WTC11 (cell line): ENCODE measurements at regions of chr15 and their contacts with region 1.

Region 1: GRCh38 chr15:45118131-45118588 is 4.0 kb downstream of the DUOXA2 start:
- DNase-seq: peak; percentile 93
- ATAC-seq: peak; percentile 92
- H3K4me3 Mint-ChIP-seq: peak overlapping the region; percentile 64
- H3K27ac Mint-ChIP-seq: no peak overlapping the region
- H3K4me1 Mint-ChIP-seq: peaks cover 30% of the 10 kb centered on the region
- H3K27me3 Mint-ChIP-seq: peaks cover 97% of the 10 kb centered on the region
- CTCF ChIP-seq: peak; percentile 86

Region 2: GRCh38 chr15:44971036-44971435 is 147.1 kb before region 1 on chr15:
- CTCF ChIA-PET with region 1: interaction called, 21 read pairs
- POLR2A ChIA-PET with region 1: no interaction called
- DNase-seq: no peak
- ATAC-seq: no peak
- H3K4me3 Mint-ChIP-seq: no peak overlapping the region
- H3K27ac Mint-ChIP-seq: no peak overlapping the region
- H3K4me1 Mint-ChIP-seq: no peaks in the 10 kb centered on the region
- H3K27me3 Mint-ChIP-seq: no peaks in the 10 kb centered on the region; the same call in 1 of the 2 replicates
- CTCF ChIP-seq: no peak

Region 3: GRCh38 chr15:45091161-45091560 is 27.0 kb before region 1 on chr15:
- CTCF ChIA-PET with region 1: interaction called, 14 read pairs
- POLR2A ChIA-PET with region 1: no interaction called
- DNase-seq: no peak
- ATAC-seq: no peak
- H3K4me3 Mint-ChIP-seq: no peak overlapping the region
- H3K27ac Mint-ChIP-seq: no peak overlapping the region
- H3K4me1 Mint-ChIP-seq: no peaks in the 10 kb centered on the region
- H3K27me3 Mint-ChIP-seq: peaks cover 16% of the 10 kb centered on the region
- CTCF ChIP-seq: no peak

Region 4: DNA sequence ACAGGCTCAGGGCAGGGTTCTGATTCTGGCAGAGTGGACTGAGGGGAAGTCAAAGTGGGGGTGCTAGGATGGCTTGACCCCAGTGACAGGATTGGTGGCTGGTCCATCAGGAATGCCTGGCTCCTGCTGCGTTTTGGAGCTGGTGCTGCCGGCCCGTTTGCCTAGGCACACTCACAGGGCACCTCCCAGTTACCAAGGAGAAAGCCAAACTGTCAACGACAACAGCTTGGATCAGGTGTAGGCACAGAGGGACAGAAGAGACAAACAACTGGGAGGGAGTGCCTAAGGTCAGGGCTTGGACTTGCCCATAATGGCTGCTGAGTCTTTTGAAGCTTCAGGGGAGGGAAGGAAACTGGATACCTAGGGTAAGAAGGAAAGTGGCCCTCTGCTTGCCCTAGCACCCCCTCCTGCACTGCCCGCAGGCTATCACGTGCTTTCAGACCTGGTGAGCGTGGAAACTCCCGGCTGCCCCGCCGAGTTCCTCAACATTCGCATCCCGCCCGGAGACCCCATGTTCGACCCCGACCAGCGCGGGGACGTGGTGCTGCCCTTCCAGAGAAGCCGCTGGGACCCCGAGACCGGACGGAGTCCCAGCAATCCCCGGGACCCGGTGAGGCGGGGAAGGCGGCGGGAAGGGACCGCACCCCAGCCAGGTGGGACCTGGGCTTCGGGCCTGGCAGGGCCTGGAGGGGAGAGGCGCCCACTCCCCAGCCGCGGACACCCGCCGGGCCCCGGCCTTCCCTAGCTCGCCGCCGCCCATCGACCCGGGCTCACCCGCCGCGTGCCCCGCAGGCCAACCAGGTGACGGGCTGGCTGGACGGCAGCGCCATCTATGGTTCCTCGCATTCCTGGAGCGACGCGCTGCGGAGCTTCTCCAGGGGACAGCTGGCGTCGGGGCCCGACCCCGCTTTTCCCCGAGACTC is 16.8 kb after region 1 on chr15:
- CTCF ChIA-PET with region 1: interaction called, 231 read pairs
- POLR2A ChIA-PET with region 1: interaction called, 5 read pairs
- DNase-seq: peak; percentile 60
- ATAC-seq: peak; percentile 72
- H3K4me3 Mint-ChIP-seq: peak overlapping the region; percentile 66
- H3K27ac Mint-ChIP-seq: no peak overlapping the region
- H3K4me1 Mint-ChIP-seq: peaks cover 12% of the 10 kb centered on the region
- H3K27me3 Mint-ChIP-seq: peaks cover 83% of the 10 kb centered on the region
- CTCF ChIP-seq: no peak

Region 5: DNA sequence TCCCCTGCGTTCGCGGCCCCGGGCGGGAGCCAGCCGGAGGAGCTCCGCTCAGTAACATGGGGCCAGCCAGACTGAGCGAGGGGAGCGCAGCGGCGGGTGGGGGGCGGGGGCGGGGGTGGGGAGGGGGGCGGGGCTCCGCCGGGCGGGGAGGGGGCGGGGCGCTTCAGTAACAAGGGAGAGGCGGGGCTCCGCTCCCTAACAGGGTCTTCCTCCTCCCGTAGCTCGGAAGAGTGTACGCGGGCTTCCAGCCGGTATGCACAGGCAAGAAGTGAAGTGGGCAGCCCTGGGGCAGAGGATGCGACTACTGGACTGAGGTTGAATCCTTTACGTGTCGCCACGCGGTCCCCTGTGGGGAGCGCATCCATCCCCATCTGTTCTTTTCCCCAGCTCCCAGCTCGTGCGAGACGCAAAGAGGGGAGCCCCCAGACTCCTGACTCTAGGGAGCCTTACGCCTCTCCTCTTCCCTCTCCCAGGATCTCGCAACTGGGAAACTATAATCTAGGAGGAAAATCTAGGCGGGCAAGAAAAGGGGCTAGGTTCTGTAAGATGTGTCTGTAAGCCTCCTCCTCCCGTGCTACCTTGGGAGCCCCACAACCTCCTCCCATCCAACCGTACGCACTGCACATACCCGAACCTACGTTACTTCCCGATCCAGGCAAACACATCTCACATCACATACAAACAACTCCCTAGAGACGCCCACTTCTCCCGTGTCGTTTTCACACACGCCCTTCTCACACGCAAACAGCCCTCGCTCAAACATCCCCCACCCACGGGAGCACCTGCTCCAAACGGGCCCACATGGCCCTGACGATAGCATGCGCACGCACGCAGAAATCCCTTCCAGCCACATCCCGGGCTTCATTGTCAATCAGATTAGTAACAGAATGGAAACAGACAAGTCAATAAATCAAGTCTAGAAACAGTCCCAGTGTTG is 70.0 kb after region 1 on chr15 and contains the start of gene SHF:
- CTCF ChIA-PET with region 1: interaction called, 10 read pairs
- POLR2A ChIA-PET with region 1: no interaction called
- DNase-seq: peak; percentile 69
- ATAC-seq: peak; percentile 77
- H3K4me3 Mint-ChIP-seq: peak within 1 kb of the TSS; percentile 91
- H3K27ac Mint-ChIP-seq: no peak within 1 kb of the TSS; the same call in 1 of the 2 replicates
- H3K4me1 Mint-ChIP-seq: peaks cover 40% of the 10 kb centered on the region
- H3K27me3 Mint-ChIP-seq: peaks cover 34% of the 10 kb centered on the region
- CTCF ChIP-seq: no peak
- total RNA-seq, gene SHF: 30.6 to 33.1 TPM (median 31.0 TPM) in 3 replicates

Region 6: DNA sequence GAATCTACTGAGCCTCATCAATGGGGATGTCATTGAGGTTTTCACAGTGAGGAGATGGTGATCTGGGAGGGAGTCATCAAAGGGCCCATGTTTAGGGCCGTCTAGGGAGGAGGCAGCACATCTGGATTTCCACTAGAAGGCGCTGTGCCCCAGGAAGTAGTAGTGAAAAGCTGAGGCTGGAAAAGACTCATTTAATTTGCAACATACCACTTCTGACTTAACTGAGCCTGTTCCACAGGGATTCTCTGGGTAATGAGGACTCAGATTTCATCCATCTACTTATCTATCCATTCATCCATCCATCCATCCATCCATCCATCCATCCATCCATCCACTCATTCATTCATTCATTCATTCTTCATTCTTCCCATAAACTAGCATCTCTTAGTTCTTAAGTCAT is 87.0 kb after region 1 on chr15:
- CTCF ChIA-PET with region 1: interaction called, 15 read pairs
- POLR2A ChIA-PET with region 1: no interaction called
- DNase-seq: peak; percentile 77
- ATAC-seq: peak; percentile 52
- H3K4me3 Mint-ChIP-seq: no peak overlapping the region
- H3K27ac Mint-ChIP-seq: no peak overlapping the region
- H3K4me1 Mint-ChIP-seq: no peaks in the 10 kb centered on the region
- H3K27me3 Mint-ChIP-seq: peaks cover 19% of the 10 kb centered on the region
- CTCF ChIP-seq: peak; percentile 65